Activated T-helper 1 cell treated with anti-CD3 and anti-CD28 coated beads, Interleukin-12 subunit alpha, Interleukin-12 subunit beta, Interleukin-2, Interleukin-4 antibody, amounts not matched to agents 30 ng/mL and 10 ng/mL and 1 ng/mL, durations not matched to agents 14 hours and 24 hours and 36 hours (primary cell): ENCODE measurements at regions of chr9 and their contacts with region 1.

Region 1: DNA sequence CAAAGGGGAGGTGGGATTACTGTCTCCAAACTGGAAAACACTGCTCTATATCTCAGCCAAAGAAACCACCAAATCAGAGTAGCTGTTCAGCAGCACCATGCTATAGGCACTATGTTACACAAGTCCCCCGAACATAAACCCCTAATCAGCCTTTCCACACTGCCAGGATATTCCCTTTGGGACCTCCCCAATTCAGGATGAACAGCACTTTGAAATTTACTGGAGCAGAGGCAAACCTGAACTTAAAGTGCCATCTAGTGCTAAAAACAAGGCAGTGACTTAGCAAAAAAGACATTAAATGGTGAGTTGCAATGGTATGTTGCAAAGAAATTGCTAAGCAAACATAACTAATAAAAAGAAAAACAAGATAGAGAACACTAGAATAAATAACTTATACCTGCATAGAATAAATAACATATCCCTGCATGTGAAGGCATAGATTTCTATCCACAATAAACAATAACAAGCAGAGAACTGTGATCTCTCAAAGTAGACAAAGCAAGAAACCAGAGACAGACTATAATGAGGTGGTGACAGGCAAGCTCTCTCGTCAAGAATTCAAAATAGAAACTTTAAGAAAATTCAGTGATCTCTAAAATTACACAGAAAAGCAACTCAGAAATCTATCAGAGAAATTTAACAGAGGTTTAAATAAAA is 584.4 kb upstream of the ACO1 start:
- DNase-seq: no peak
- H3K4me3 Mint-ChIP-seq: no peak overlapping the region
- H3K27ac Mint-ChIP-seq: no peak overlapping the region
- H3K4me1 Mint-ChIP-seq: no peaks in the 10 kb centered on the region
- H3K27me3 Mint-ChIP-seq: no peaks in the 10 kb centered on the region

Region 2: DNA sequence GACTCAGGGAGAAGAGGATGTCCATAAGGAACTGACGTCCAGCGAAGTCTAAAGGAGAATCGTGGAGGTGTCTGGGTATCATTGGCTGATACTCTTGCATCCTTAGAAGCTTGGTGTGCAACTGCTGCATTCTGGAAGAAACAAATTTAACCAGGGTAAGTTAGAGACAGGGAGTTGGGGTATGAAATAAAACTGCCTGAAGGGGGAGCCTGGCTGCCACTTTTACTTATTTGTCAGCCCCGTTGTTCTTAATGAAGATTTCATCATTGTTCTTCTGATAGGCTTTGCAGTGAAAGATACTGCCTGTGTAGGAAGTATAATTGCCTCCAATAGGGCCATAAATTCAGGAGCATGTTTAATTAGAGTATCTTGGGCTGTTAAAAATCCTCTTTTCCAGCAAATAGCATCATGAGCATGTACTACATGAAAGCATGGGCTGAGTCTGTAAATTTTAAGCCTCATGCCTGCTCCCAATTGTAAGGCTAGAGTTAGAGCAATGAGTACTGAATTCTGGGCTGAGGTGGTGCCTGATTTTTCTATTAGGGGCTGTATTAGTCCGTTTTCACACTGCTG is 680.1 kb before region 1 on chr9:
- intact Hi-C with region 1: loop called (anchors 1 kb)
- DNase-seq: no peak
- H3K4me3 Mint-ChIP-seq: no peak overlapping the region
- H3K27ac Mint-ChIP-seq: no peak overlapping the region
- H3K4me1 Mint-ChIP-seq: no peaks in the 10 kb centered on the region
- H3K27me3 Mint-ChIP-seq: no peaks in the 10 kb centered on the region

Region 3: DNA sequence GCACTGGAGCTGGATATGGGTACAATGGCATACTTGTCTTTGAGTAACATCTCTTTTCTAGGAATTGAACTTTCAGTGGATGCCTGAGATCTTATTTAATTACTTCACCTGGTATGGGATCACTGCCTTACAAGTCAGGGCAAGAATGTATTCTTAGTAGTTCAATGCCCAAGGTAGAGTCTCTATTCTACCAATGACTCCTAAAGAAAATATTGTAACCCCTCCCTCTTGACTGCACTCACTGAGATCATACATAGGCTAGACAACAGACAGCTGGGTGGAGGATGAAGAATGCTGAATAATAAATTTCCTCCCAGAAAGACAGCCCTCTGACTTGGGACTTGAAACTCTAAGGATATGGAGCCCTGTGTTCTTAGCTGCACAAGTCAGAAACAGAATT is 631.9 kb before region 1 on chr9:
- intact Hi-C with region 1: no loop called
- DNase-seq: no peak
- H3K4me3 Mint-ChIP-seq: no peak overlapping the region
- H3K27ac Mint-ChIP-seq: no peak overlapping the region
- H3K4me1 Mint-ChIP-seq: no peaks in the 10 kb centered on the region
- H3K27me3 Mint-ChIP-seq: no peaks in the 10 kb centered on the region

Region 4: GRCh38 chr9:31730398-31730797 is 69.7 kb before region 1 on chr9:
- intact Hi-C with region 1: no loop called
- DNase-seq: no peak
- H3K4me3 Mint-ChIP-seq: no peak overlapping the region
- H3K27ac Mint-ChIP-seq: no peak overlapping the region
- H3K4me1 Mint-ChIP-seq: no peaks in the 10 kb centered on the region
- H3K27me3 Mint-ChIP-seq: no peaks in the 10 kb centered on the region